ENCODE measurements at regions of chr12 and their contacts with region 1.

Region 1: GRCh38 chr12:112382232-112382796 is at the start of gene HECTD4:
- H3K4me3 Mint-ChIP-seq: peak within 1 kb of the TSS; percentile 92
- H3K27ac Mint-ChIP-seq: peak within 1 kb of the TSS; percentile 95
- H3K4me1 Mint-ChIP-seq: peaks cover 43% of the 10 kb centered on the region
- H3K27me3 Mint-ChIP-seq: no peaks in the 10 kb centered on the region

Region 2: DNA sequence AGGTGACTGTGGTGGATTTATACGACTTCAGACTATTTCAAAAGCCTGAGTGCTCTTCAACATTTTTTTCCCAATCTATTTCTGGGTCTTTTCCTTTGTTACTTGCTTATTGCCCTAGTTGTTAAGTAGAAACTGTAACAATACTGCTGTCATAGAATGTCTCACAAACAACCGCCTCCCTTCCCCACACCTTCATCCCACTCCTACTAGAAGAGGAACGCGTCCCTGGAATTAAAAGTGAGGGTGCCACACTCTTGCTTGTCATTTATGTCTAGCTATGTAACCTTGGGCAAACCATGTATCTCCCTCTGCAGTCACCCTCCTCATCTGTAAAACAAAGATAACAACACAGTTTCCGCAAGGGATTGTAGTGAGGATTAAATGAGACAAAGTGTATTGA is 705.1 kb before region 1 on chr12:
- intact Hi-C with region 1: no loop called
- H3K4me3 Mint-ChIP-seq: no peak overlapping the region
- H3K27ac Mint-ChIP-seq: no peak overlapping the region
- H3K4me1 Mint-ChIP-seq: no peaks in the 10 kb centered on the region
- H3K27me3 Mint-ChIP-seq: no peaks in the 10 kb centered on the region

Region 3: GRCh38 chr12:112012775-112013600 is 369.3 kb before region 1 on chr12 and contains the starts of genes ERP29 and TMEM116:
- intact Hi-C with region 1: loop called (anchors 10 kb)
- H3K4me3 Mint-ChIP-seq: peak within 1 kb of the TSS; percentile 95
- H3K27ac Mint-ChIP-seq: peak within 1 kb of the TSS; percentile 98
- H3K4me1 Mint-ChIP-seq: peaks cover 56% of the 10 kb centered on the region
- H3K27me3 Mint-ChIP-seq: no peaks in the 10 kb centered on the region

Region 4: DNA sequence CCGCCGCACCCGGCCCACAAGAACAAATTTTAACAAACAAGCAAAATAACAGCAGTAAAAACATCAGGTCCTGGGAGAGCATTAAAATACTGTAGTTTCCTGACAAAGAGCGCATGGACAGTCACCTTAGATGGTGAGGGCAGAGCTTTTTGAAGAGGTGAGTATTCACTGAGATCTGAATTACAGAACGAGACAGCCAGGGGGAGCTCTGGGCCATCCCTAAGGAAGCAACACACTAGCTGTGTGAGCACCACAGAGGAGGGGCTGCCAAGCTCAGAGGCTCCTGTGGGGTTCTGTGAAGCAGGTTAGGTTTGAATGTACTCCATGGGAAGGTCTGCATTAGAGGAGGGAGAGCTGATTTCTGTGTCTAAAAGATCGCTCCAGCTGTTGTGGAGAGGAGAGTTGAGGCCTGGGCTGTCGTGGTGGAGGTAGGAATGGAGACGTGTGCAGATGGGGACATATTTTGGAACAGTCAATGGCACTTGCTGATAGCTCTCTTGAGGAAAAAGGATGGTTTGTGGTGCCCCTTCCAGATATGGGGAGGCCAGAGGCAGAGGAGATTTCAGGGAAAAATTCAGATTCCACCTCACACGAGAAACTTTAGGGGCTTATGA is 184.1 kb before region 1 on chr12:
- intact Hi-C with region 1: loop called (anchors 1 kb)
- H3K4me3 Mint-ChIP-seq: no peak overlapping the region
- H3K27ac Mint-ChIP-seq: no peak overlapping the region
- H3K4me1 Mint-ChIP-seq: no peaks in the 10 kb centered on the region
- H3K27me3 Mint-ChIP-seq: no peaks in the 10 kb centered on the region

Region 5: DNA sequence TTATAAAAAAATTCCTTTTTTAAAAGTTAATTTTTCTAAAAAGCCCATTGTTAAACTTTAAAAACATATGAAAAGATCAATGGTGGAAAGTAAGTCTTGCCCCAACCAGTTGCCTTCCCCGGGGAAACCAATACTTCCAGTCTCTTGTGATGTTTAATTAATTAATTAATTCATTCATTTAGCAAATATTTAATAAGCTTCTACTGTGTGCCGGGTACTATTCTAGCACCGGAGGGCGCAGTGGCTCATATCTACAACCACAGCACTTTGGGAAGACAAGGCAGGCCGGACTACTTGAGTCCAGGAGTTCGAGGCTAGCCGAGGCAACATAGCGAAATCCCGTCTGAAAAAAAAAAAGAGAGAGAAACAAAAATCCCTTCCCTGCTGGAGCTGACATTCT is 87.5 kb before region 1 on chr12:
- intact Hi-C with region 1: loop called (anchors 10 kb)
- H3K4me3 Mint-ChIP-seq: no peak overlapping the region
- H3K27ac Mint-ChIP-seq: no peak overlapping the region
- H3K4me1 Mint-ChIP-seq: no peaks in the 10 kb centered on the region
- H3K27me3 Mint-ChIP-seq: no peaks in the 10 kb centered on the region

Region 6: DNA sequence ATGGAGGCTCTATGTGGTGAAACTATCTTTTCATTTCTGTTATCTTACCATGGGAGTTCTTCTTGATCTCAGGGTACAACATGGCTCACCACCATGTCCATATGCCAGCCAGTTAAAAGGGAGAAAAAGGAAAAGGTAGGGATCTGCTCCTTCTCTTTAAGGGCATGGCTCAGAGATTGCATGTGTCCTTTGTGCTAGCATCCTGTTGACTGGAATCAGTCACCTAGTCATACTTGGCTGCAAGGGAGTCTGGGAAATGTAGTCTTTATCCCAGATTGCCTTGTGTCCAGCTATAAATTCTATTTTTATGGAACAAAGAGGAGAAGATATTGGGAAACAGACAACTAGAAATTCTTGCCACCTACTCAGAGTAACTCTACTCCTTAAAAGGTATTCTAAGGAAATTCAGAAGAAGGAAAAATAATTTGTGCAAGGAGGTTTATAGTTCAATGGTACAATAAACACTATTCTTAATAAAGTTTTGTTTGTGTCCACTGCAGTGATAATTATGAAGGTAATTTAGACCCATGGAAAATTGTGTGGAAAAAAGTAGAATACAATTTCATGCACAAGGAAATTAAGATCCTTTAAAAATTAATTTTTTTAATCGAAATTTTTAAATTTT is 322.8 kb after region 1 on chr12:
- intact Hi-C with region 1: no loop called
- H3K4me3 Mint-ChIP-seq: no peak overlapping the region
- H3K27ac Mint-ChIP-seq: no peak overlapping the region
- H3K4me1 Mint-ChIP-seq: no peaks in the 10 kb centered on the region
- H3K27me3 Mint-ChIP-seq: peaks cover 5% of the 10 kb centered on the region

Measured in dendritic cell treated with granulocyte-macrophage colony-stimulating factor and Interleukin-4, amounts not matched to agents 40 ng/mL and 50 ng/mL, for 4 days (primary cell).